WTC11 (cell line): ENCODE measurements at regions of chr11 and their contacts with region 1.

Region 1: DNA sequence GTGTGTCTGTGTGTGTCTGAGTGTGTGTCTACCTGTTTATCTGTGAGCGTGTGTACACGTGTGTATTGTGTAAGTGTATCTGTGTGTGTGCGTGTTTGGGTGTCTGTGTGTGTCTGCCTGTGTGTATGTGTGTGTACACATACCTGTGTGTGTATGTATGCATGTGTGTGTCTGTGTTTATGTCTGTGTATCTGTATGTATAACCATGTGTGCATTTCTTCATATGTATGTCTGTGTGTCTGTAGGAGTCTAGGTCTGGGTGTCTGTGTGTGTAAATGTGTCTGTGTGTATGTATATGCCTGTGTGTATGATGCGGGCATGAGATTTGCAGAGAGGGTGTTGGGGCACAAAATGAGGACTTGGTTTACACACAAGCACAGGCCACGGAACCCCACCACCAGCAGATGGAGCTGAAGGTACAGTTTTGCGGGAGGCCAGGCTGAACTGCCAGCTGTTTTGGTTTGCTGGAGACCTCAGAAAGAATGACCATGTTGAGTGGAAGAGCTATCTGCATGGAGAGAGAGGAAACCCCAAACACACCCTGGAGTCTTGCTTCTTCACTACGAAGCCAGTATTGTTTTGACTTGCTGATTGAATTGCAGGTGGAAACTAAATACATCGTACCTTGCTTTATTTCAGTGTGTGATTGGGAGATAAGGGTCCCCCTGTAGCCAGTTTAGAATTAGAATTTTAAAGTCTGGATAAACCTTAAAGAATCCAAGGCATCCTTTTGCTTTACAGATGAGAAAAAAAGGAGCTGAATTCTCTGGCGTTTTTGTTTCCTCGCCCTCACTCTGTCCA is 497.2 kb downstream of the NTM start:
- DNase-seq: peak; percentile 79
- ATAC-seq: peak; percentile 69
- H3K4me3 Mint-ChIP-seq: no peak overlapping the region
- H3K27ac Mint-ChIP-seq: peak overlapping the region; percentile 69
- H3K4me1 Mint-ChIP-seq: peaks cover 63% of the 10 kb centered on the region
- H3K27me3 Mint-ChIP-seq: no peaks in the 10 kb centered on the region
- CTCF ChIP-seq: peak; percentile 41

Region 2: DNA sequence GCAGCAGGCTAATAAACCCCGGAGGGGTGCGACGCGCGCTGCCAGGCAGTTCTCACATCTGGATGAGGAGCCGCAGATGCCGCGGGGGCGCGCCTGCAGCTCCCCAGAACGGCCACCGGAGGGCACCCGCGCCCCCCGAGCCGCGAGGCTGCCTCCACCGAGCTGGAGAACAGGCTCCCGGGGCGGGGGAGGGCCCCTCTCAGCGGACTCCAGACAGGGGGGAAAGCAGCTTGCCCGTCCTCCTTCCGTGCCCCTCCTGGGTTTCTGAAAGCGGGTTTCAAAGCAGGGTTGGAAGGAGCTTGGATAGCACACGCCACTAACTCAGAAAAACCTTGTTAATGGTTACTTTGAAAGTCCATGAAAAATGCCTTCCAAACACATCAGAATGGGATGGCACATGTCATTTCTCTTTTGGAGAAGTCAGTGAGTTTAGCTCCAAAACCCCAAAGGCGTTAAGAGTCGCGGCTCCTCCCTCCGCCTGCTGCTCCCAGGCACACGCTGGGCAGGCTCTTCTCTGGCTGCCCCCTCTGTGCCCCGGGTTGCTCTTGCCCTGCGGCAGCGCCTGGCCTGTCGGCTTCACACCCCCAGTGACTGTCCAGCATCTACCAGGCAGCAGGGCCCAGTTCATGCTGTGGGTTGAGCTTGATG is 179.5 kb before region 1 on chr11:
- CTCF ChIA-PET with region 1: interaction called, 57 read pairs
- POLR2A ChIA-PET with region 1: no interaction called
- DNase-seq: peak; percentile 81
- ATAC-seq: peak; percentile 62
- H3K4me3 Mint-ChIP-seq: no peak overlapping the region
- H3K27ac Mint-ChIP-seq: no peak overlapping the region
- H3K4me1 Mint-ChIP-seq: 0 out of 2 replicates have a peak, but pooled peaks cover 6% of the 10 kb centered on the region
- H3K27me3 Mint-ChIP-seq: peaks cover 24% of the 10 kb centered on the region
- CTCF ChIP-seq: peak; percentile 81

Region 3: GRCh38 chr11:131841028-131841427 is 26.6 kb before region 1 on chr11:
- CTCF ChIA-PET with region 1: interaction called, 37 read pairs
- POLR2A ChIA-PET with region 1: no interaction called
- DNase-seq: no peak
- ATAC-seq: no peak
- H3K4me3 Mint-ChIP-seq: no peak overlapping the region
- H3K27ac Mint-ChIP-seq: no peak overlapping the region
- H3K4me1 Mint-ChIP-seq: peaks cover 44% of the 10 kb centered on the region
- H3K27me3 Mint-ChIP-seq: no peaks in the 10 kb centered on the region; the same call in none of the 2 replicates
- CTCF ChIP-seq: no peak

Region 4: GRCh38 chr11:131889146-131889577 is 21.5 kb after region 1 on chr11:
- CTCF ChIA-PET with region 1: interaction called, 79 read pairs
- POLR2A ChIA-PET with region 1: interaction called, 3 read pairs
- DNase-seq: no peak
- ATAC-seq: peak; percentile 59
- H3K4me3 Mint-ChIP-seq: no peak overlapping the region
- H3K27ac Mint-ChIP-seq: no peak overlapping the region
- H3K4me1 Mint-ChIP-seq: 0 out of 2 replicates have a peak, but pooled peaks cover 8% of the 10 kb centered on the region
- H3K27me3 Mint-ChIP-seq: no peaks in the 10 kb centered on the region; the same call in 1 of the 2 replicates
- CTCF ChIP-seq: no peak

Region 5: DNA sequence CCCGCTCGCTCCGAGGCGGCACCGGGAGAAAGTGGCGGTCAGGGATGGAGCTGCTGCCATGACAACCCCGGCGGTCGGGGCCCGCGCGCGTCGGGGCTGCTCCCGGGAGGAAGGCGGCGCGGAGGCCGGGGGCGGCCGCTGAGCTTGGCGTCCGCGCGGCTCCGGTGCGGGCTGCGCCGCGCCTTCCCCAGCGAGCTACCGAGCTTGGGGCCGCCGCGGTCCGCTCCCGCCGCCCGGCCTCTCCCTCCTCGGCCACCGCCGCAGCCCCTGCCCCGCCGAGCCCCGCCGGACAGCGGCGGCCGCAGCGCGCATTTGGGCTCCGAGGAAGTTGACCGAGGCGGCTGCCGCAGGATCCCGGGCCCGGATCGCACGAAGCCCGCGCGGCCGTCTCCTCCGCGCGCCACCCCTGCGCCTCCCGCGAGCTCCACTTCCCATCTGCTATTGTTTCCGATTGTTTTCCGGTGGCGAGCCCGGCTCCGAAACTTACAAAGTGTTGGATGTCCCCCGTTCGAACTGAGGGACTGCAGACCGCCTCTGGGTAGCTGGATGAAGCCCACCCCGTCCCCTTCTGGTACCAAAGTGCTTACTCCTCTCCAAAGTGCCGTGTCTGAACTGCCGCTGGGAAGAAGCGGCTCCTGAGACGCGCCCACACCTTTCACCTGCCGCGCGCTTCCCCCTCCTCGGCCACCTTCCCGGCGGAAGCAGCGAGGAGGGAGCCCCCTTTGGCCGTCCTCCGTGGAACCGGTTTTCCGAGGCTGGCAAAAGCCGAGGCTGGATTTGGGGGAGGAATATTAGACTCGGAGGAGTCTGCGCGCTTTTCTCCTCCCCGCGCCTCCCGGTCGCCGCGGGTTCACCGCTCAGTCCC is 43.1 kb after region 1 on chr11:
- CTCF ChIA-PET with region 1: interaction called, 142 read pairs
- POLR2A ChIA-PET with region 1: interaction called, 5 read pairs
- DNase-seq: peak; percentile 50
- ATAC-seq: peak; percentile 32
- H3K4me3 Mint-ChIP-seq: peak overlapping the region; percentile 88
- H3K27ac Mint-ChIP-seq: no peak overlapping the region
- H3K4me1 Mint-ChIP-seq: peaks cover 52% of the 10 kb centered on the region
- H3K27me3 Mint-ChIP-seq: peaks cover 8% of the 10 kb centered on the region; the same call in 1 of the 2 replicates
- CTCF ChIP-seq: no peak

Region 6: GRCh38 chr11:132114185-132114584 is 246.5 kb after region 1 on chr11:
- CTCF ChIA-PET with region 1: interaction called, 14 read pairs
- POLR2A ChIA-PET with region 1: no interaction called
- DNase-seq: peak; percentile 72
- ATAC-seq: peak; percentile 83
- H3K4me3 Mint-ChIP-seq: no peak overlapping the region
- H3K27ac Mint-ChIP-seq: no peak overlapping the region
- H3K4me1 Mint-ChIP-seq: peaks cover 56% of the 10 kb centered on the region
- H3K27me3 Mint-ChIP-seq: no peaks in the 10 kb centered on the region
- CTCF ChIP-seq: no peak